HCT116 (cell line): ENCODE measurements at regions of chr11 and their contacts with region 1.

Region 1: GRCh38 chr11:67507864-67508485 is at the start of gene CDK2AP2:
- DNase-seq: peak; percentile 99
- ATAC-seq: peak; percentile 79
- H3K4me3 ChIP-seq: peak within 1 kb of the TSS; percentile 72 to 85
- H3K27ac ChIP-seq: peak within 1 kb of the TSS; percentile 93
- H3K4me1 ChIP-seq: peaks cover 31 to 43% of the 10 kb centered on the region in 2 experiments
- H3K27me3 ChIP-seq: no peaks in the 10 kb centered on the region
- CTCF ChIP-seq: no peak
- POLR2A ChIP-seq: peak; percentile 26
- RAD21 ChIP-seq: no peak
- total RNA-seq, gene CDK2AP2: 53.6 TPM

Region 2: DNA sequence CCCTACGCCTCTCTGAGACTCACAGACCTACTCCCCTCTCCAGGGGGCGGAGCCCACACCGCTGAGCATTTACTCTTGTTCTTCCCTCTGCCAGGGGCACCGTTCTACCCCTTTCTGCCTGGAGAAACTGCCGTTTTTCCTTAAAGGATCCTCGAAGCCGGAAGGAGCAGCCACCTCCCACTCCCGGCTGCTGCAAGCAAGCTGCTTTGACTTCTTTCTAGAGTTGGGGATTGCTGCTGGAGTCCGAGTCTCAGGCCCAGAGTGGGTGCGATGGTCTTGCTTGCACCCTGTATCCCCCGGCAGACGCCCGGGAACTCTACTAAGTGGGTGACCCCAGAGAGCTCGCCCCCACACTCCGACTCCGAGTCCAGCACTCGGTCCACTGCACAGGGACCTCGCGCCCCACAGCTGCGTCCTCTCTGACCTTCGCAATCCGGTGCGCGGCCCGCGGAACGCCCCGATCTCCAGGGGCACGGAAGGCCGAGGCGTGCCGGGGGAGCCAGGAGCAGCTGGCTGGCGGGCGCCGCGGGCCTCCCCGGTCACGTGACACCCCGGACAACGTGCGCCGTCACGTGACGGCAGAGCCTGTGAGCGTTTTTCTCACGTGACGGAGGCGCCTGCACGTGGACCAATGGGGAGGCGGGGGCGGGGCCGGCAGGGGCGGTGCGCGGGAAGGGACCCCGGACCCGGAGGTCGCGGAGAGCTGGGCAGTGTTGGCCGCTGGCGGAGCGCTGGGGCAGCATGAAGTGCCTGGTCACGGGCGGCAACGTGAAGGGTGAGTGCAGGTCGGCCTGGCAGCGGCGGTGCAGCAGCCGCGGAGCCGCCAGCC is 116.5 kb before region 1 on chr11 and contains the start of gene RAD9A:
- CTCF ChIA-PET with region 1: no interaction called
- POLR2A ChIA-PET with region 1: no interaction called
- RAD21 ChIA-PET with region 1: no interaction called
- intact Hi-C with region 1: loop called (anchors 1 kb)
- DNase-seq: peak; percentile 86
- ATAC-seq: peak; percentile 71
- H3K4me3 ChIP-seq: peak within 1 kb of the TSS; percentile 69
- H3K27ac ChIP-seq: peak within 1 kb of the TSS; percentile 85
- H3K4me1 ChIP-seq: peaks cover 9 to 34% of the 10 kb centered on the region in 2 experiments
- H3K27me3 ChIP-seq: no peaks in the 10 kb centered on the region
- CTCF ChIP-seq: no peak
- POLR2A ChIP-seq: no peak
- RAD21 ChIP-seq: no peak
- total RNA-seq, gene RAD9A: 49.8 TPM

Region 3: GRCh38 chr11:67401495-67402191 is 106.3 kb before region 1 on chr11 and contains the start of gene PPP1CA:
- CTCF ChIA-PET with region 1: interaction called, 11 read pairs
- POLR2A ChIA-PET with region 1: no interaction called
- RAD21 ChIA-PET with region 1: no interaction called
- intact Hi-C with region 1: loop called (anchors 1 kb)
- DNase-seq: peak; percentile 53
- ATAC-seq: peak; percentile 90
- H3K4me3 ChIP-seq: peak within 1 kb of the TSS; percentile 82 to 90
- H3K27ac ChIP-seq: peak within 1 kb of the TSS; percentile 99
- H3K4me1 ChIP-seq: peaks cover 9 to 18% of the 10 kb centered on the region in 2 experiments
- H3K27me3 ChIP-seq: no peaks in the 10 kb centered on the region
- CTCF ChIP-seq: peak in 1 of 3 experiments; percentile 33; a peak in 3 of 6 replicates
- POLR2A ChIP-seq: peak; percentile 24
- RAD21 ChIP-seq: peak; percentile 48
- total RNA-seq, gene PPP1CA: 238 TPM

Region 4: DNA sequence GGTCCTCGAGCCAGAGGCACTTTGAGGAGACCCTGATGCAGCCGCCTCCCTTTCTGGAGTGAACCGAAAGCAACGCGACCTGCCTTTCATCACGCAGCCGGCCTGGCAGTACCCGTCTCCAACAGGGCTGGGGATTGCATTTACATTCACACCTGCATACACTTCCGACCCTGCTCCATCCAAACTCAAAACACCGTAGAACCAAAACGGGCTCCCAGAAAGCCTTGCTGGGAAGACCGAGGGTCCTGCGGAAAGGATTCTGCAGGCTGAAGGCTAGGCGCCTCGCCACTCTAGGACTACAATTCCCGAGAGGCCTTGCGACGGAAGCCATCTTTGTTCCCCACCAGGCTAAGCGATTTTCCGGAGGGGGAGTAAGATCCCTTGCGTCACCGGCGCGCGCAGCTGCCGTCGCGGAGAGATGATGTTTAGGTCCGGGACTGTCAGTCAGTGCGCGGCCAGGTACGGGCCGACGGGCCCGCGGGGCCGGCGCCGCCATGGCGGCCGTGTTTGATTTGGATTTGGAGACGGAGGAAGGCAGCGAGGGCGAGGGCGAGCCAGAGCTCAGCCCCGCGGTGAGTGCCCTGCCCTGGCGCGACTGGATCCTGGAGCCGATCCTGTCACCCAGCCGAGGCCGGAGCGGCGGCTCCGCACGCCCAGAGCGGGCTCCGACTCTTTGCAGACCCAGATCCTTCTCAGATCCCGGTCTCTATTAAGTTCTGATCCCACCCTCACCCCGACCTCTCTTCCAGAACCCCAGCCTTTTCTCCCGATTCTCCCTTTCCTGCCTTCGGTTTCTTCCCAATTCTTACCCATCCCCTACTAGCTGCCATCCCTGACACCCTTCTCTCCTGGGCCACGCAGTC is 79.7 kb before region 1 on chr11 and contains the start of gene RPS6KB2:
- CTCF ChIA-PET with region 1: no interaction called
- POLR2A ChIA-PET with region 1: no interaction called
- RAD21 ChIA-PET with region 1: no interaction called
- intact Hi-C with region 1: loop called (anchors 5 kb)
- DNase-seq: peak; percentile 94
- ATAC-seq: peak; percentile 91
- H3K4me3 ChIP-seq: peak within 1 kb of the TSS; percentile 91 to 98
- H3K27ac ChIP-seq: peak within 1 kb of the TSS; percentile 71
- H3K4me1 ChIP-seq: peaks cover 11 to 12% of the 10 kb centered on the region in 2 experiments
- H3K27me3 ChIP-seq: no peaks in the 10 kb centered on the region
- CTCF ChIP-seq: no peak
- POLR2A ChIP-seq: peak; percentile 52
- RAD21 ChIP-seq: no peak
- total RNA-seq, gene RPS6KB2: 54.1 TPM

Region 5: GRCh38 chr11:67468835-67469811 is 38.9 kb before region 1 on chr11 and contains the start of gene TMEM134:
- CTCF ChIA-PET with region 1: no interaction called
- POLR2A ChIA-PET with region 1: no interaction called
- RAD21 ChIA-PET with region 1: no interaction called
- intact Hi-C with region 1: loop called (anchors 1 kb)
- DNase-seq: peak; percentile 82
- ATAC-seq: peak; percentile 71
- H3K4me3 ChIP-seq: peak within 1 kb of the TSS; percentile 82 to 95
- H3K27ac ChIP-seq: peak within 1 kb of the TSS; percentile 88
- H3K4me1 ChIP-seq: peaks cover 24 to 43% of the 10 kb centered on the region in 2 experiments
- H3K27me3 ChIP-seq: no peaks in the 10 kb centered on the region
- CTCF ChIP-seq: peak in 2 of 3 experiments; percentile 26 to 28; a peak in 2 of 6 replicates
- POLR2A ChIP-seq: peak; percentile 88
- RAD21 ChIP-seq: no peak
- total RNA-seq, gene TMEM134: 44.2 TPM

Region 6: GRCh38 chr11:67572747-67573419 is 64.9 kb after region 1 on chr11:
- CTCF ChIA-PET with region 1: no interaction called
- POLR2A ChIA-PET with region 1: no interaction called
- RAD21 ChIA-PET with region 1: no interaction called
- intact Hi-C with region 1: no loop called
- DNase-seq: peak; percentile 65
- ATAC-seq: peak; percentile 91
- H3K4me3 ChIP-seq: no peak overlapping the region
- H3K27ac ChIP-seq: no peak overlapping the region
- H3K4me1 ChIP-seq: peaks cover 0 to 3% of the 10 kb centered on the region in 2 experiments; a peak in 1 of 4 replicates
- H3K27me3 ChIP-seq: no peaks in the 10 kb centered on the region
- CTCF ChIP-seq: peak; percentile 62 to 90 (median 84)
- POLR2A ChIP-seq: no peak
- RAD21 ChIP-seq: peak; percentile 87